H1 (cell line): ENCODE measurements at regions of chr1 and their contacts with region 1.

Region 1: GRCh38 chr1:21232044-21232443 is 55.3 kb upstream of the EIF4G3 start:
- DNase-seq: peak in 1 of 2 experiments; percentile 59
- H3K4me3 ChIP-seq: no peak overlapping the region
- H3K27ac ChIP-seq: no peak overlapping the region
- H3K4me1 ChIP-seq: no peaks in the 10 kb centered on the region
- H3K27me3 ChIP-seq: no peaks in the 10 kb centered on the region
- CTCF ChIP-seq: peak; percentile 25 to 75 (median 75)
- EP300 ChIP-seq: no peak
- POLR2A ChIP-seq: no peak
- RAD21 ChIP-seq: peak; percentile 89 to 90

Region 2: GRCh38 chr1:21117597-21118001 is 114.4 kb before region 1 on chr1:
- CTCF ChIA-PET with region 1: no interaction called
- POLR2A ChIA-PET with region 1: no interaction called
- DNase-seq: no peak
- H3K4me3 ChIP-seq: no peak overlapping the region
- H3K27ac ChIP-seq: no peak overlapping the region
- H3K4me1 ChIP-seq: no peaks in the 10 kb centered on the region
- H3K27me3 ChIP-seq: no peaks in the 10 kb centered on the region
- CTCF ChIP-seq: no peak
- EP300 ChIP-seq: no peak
- POLR2A ChIP-seq: no peak
- RAD21 ChIP-seq: no peak

Region 3: GRCh38 chr1:21294266-21294989 is 62.4 kb after region 1 on chr1:
- CTCF ChIA-PET with region 1: interaction called, 10 read pairs
- POLR2A ChIA-PET with region 1: no interaction called
- DNase-seq: no peak
- H3K4me3 ChIP-seq: no peak overlapping the region
- H3K27ac ChIP-seq: no peak overlapping the region
- H3K4me1 ChIP-seq: peaks cover 0 to 18% (median 14%) of the 10 kb centered on the region in 4 experiments; a peak in 6 of 7 replicates
- H3K27me3 ChIP-seq: no peaks in the 10 kb centered on the region
- CTCF ChIP-seq: no peak
- EP300 ChIP-seq: no peak
- POLR2A ChIP-seq: no peak
- RAD21 ChIP-seq: no peak

Region 4: GRCh38 chr1:21355956-21356355 is 123.9 kb after region 1 on chr1:
- CTCF ChIA-PET with region 1: interaction called, 14 read pairs
- POLR2A ChIA-PET with region 1: no interaction called
- DNase-seq: no peak
- H3K4me3 ChIP-seq: no peak overlapping the region
- H3K27ac ChIP-seq: no peak overlapping the region
- H3K4me1 ChIP-seq: peaks cover 0 to 2% (median 0%) of the 10 kb centered on the region in 4 experiments; a peak in 1 of 7 replicates
- H3K27me3 ChIP-seq: no peaks in the 10 kb centered on the region
- CTCF ChIP-seq: no peak
- EP300 ChIP-seq: no peak
- POLR2A ChIP-seq: no peak
- RAD21 ChIP-seq: no peak